Thyroid gland (tissue), 4 donors: ENCODE measurements at regions of chr7 and their contacts with region 1.

Region 1: DNA sequence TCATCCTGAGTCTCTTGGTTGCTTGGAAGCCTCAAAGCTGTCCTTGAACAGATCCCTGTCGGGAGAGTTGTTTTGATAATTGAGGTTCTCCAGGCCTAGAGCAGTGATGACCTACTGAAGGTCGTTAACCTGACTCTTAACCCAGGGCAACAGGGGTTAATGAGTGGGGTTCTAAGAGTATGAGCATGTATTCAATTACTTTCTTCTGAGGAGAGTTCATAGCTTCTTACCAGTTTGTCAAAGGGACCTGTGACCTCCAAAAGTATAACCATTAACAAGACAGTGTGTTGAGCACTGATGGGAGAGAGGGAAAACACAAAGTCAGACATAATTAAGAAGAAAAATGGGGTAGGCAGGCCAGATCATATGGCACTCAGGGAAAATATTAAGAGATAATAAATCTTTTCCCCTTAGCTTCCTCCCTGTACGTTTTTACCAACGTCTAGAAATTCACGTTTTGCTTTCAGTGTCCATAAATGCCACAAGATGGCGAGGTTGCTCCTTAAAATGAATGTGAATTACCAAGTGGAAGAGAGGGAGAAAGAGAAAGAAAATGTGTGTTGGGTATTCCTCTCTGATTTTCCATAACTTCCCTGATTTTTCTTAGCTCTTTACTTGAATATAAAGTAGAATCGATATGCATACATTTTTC is 97.6 kb downstream of the SUGCT start:
- DNase-seq: peak; percentile 16 to 23
- H3K4me3 ChIP-seq: no peak overlapping the region
- H3K27ac ChIP-seq: no peak overlapping the region
- H3K4me1 ChIP-seq: no peaks in the 10 kb centered on the region
- H3K27me3 ChIP-seq: no peaks in the 10 kb centered on the region
- CTCF ChIP-seq: peak in 4 of 6 experiments; percentile 50 to 77 (median 68)
- POLR2A ChIP-seq: no peak

Region 2: GRCh38 chr7:40199076-40199802 is 33.1 kb before region 1 on chr7:
- intact Hi-C with region 1: no loop called
- DNase-seq: no peak
- H3K4me3 ChIP-seq: no peak overlapping the region
- H3K27ac ChIP-seq: no peak overlapping the region
- H3K4me1 ChIP-seq: no peaks in the 10 kb centered on the region
- H3K27me3 ChIP-seq: no peaks in the 10 kb centered on the region
- CTCF ChIP-seq: no peak
- POLR2A ChIP-seq: no peak

Region 3: GRCh38 chr7:40437498-40437897 is 205.1 kb after region 1 on chr7:
- intact Hi-C with region 1: no loop called
- DNase-seq: no peak
- H3K4me3 ChIP-seq: no peak overlapping the region
- H3K27ac ChIP-seq: no peak overlapping the region
- H3K4me1 ChIP-seq: no peaks in the 10 kb centered on the region
- H3K27me3 ChIP-seq: no peaks in the 10 kb centered on the region
- CTCF ChIP-seq: no peak
- POLR2A ChIP-seq: no peak

Region 4: DNA sequence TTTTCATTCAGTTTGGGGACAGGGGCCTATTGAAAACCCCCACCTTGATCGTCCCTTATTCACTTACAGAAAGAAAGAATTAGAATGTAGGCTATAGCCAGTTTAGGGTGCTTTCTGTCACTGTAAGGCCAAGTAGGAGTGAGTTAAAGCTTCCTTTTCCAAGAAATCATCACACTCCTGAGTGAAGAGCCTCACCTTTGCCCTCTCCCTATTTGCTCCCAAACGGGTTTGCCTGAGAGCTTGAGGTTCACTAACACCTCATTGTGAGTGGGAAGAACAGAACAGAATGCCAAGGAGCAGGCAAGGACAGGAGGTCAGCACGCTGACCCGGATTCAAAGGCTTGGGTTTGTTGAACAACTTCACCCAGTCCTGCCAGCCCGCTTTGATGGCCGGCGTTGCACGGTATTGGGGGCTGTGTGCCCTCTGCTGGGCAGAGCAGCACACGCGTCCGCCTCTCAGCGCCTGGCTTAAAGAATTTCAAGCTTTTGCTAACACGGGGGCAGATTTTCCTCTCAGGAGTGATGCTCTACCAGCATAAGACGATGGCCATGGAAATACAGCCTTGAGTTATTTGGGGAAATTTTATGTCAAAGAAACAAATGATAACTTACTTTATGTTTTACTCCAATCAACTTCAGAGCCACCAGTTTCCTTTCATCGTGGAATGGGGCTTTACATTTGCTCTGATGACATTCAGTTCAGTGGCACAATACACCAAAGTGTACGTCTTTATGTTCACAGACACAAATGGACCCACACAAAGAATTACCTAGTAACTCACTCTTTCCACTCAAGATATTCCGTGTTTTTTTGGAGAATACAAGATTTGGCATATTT is 372.5 kb after region 1 on chr7:
- intact Hi-C with region 1: loop called (anchors 10 kb)
- DNase-seq: peak; percentile 47 to 68
- H3K4me3 ChIP-seq: no peak overlapping the region
- H3K27ac ChIP-seq: no peak overlapping the region
- H3K4me1 ChIP-seq: no peaks in the 10 kb centered on the region
- H3K27me3 ChIP-seq: no peaks in the 10 kb centered on the region
- CTCF ChIP-seq: peak; percentile 13 to 77 (median 50)
- POLR2A ChIP-seq: no peak